ENCODE measurements at regions of chr18 and their contacts with region 1.

Region 1: GRCh38 chr18:11518788-11519685 is 90.4 kb upstream of the SLC35G4 start:
- DNase-seq: peak; percentile 67
- H3K4me3 ChIP-seq: no peak overlapping the region
- H3K4me3 Mint-ChIP-seq: no peak overlapping the region
- H3K27ac Mint-ChIP-seq: no peak overlapping the region
- H3K4me1 ChIP-seq: no peaks in the 10 kb centered on the region
- H3K4me1 Mint-ChIP-seq: no peaks in the 10 kb centered on the region
- H3K27me3 ChIP-seq: no peaks in the 10 kb centered on the region
- H3K27me3 Mint-ChIP-seq: no peaks in the 10 kb centered on the region
- CTCF ChIP-seq: peak; percentile 69 to 73

Region 2: GRCh38 chr18:11407940-11408339 is 111.1 kb before region 1 on chr18:
- CTCF ChIA-PET with region 1: no interaction called
- POLR2A ChIA-PET with region 1: no interaction called
- intact Hi-C with region 1: loop called (anchors 10 kb)
- DNase-seq: no peak
- H3K4me3 ChIP-seq: no peak overlapping the region
- H3K4me3 Mint-ChIP-seq: no peak overlapping the region
- H3K27ac Mint-ChIP-seq: no peak overlapping the region
- H3K4me1 ChIP-seq: no peaks in the 10 kb centered on the region
- H3K4me1 Mint-ChIP-seq: no peaks in the 10 kb centered on the region
- H3K27me3 ChIP-seq: no peaks in the 10 kb centered on the region
- H3K27me3 Mint-ChIP-seq: no peaks in the 10 kb centered on the region
- CTCF ChIP-seq: no peak

Region 3: DNA sequence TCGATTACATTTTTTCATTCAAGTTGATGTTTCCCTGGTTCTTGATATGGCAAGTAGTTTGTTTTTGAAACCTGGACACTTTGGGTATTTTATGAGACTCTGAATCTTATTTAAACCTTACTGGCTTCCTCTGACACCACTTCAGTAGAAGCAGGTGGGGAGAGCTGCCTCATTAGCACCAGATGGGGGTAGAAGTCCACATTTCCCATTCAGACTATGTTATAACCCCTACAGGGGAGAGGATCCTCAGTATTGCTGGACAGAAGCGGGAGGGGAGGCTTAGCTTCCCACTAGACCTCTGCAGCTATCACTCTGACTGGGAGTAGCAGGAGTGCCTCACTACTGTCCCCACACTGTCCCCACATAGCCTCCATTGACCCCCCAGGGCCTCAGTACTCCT is 54.9 kb before region 1 on chr18:
- CTCF ChIA-PET with region 1: no interaction called
- POLR2A ChIA-PET with region 1: no interaction called
- intact Hi-C with region 1: loop called (anchors 2 kb)
- DNase-seq: peak in 1 of 2 experiments; percentile 12
- H3K4me3 ChIP-seq: no peak overlapping the region
- H3K4me3 Mint-ChIP-seq: no peak overlapping the region
- H3K27ac Mint-ChIP-seq: no peak overlapping the region
- H3K4me1 ChIP-seq: no peaks in the 10 kb centered on the region
- H3K4me1 Mint-ChIP-seq: no peaks in the 10 kb centered on the region
- H3K27me3 ChIP-seq: no peaks in the 10 kb centered on the region
- H3K27me3 Mint-ChIP-seq: no peaks in the 10 kb centered on the region
- CTCF ChIP-seq: peak in 1 of 2 experiments; percentile 20

Region 4: GRCh38 chr18:11482271-11482670 is 36.8 kb before region 1 on chr18:
- CTCF ChIA-PET with region 1: no interaction called
- POLR2A ChIA-PET with region 1: no interaction called
- intact Hi-C with region 1: no loop called
- DNase-seq: no peak
- H3K4me3 ChIP-seq: no peak overlapping the region
- H3K4me3 Mint-ChIP-seq: no peak overlapping the region
- H3K27ac Mint-ChIP-seq: no peak overlapping the region
- H3K4me1 ChIP-seq: no peaks in the 10 kb centered on the region
- H3K4me1 Mint-ChIP-seq: no peaks in the 10 kb centered on the region
- H3K27me3 ChIP-seq: no peaks in the 10 kb centered on the region
- H3K27me3 Mint-ChIP-seq: no peaks in the 10 kb centered on the region
- CTCF ChIP-seq: no peak